Activated T-helper 1 cell treated with anti-CD3 and anti-CD28 coated beads, Interleukin-12 subunit alpha, Interleukin-12 subunit beta, Interleukin-2, Interleukin-4 antibody, amounts not matched to agents 30 ng/mL and 10 ng/mL and 1 ng/mL, durations not matched to agents 14 hours and 24 hours and 36 hours (primary cell): ENCODE measurements at regions of chr15 and their contacts with region 1.

Region 1: GRCh38 chr15:78170848-78171773 is 21.9 kb downstream of the IDH3A start:
- DNase-seq: no peak
- H3K4me3 Mint-ChIP-seq: no peak overlapping the region
- H3K27ac Mint-ChIP-seq: peak overlapping the region; percentile 61
- H3K4me1 Mint-ChIP-seq: peaks cover 63% of the 10 kb centered on the region
- H3K27me3 Mint-ChIP-seq: no peaks in the 10 kb centered on the region

Region 2: DNA sequence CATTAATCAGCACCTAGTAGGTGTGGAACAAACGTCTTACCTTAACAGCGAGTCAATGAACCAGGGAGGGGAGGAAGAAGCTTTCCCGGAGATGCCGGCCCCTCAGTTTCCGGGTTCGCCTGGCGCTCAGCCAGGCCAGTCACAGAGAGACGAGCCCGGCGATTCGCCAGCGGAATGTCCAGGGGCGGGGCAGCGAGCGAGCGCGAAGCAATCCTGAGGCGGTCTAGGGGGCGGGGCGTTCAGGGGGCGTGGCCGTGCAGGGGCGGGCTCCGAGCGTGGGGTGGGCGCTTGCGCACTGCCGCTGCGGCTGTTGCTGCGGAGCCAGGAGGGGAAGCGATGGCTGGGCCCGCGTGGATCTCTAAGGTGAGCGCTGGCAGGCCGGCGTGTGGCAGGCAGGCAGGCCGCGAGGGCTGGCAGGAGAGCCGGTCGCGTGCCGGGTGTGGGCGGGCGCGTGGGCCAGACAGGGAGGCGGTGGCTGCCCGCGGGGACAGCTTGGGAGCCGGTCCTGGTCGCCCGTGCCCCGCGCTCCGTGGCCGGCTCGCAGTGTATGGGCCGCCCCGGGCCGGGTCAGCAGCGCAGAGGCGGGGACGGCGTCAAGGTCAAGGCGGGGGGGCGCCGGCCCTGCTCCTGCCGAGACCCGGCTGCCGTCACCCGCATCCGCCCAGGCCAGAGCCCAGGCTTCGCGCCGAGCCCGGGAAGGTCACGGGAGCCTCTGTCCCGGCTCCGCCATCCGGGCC is 21.9 kb before region 1 on chr15 and contains the start of gene IDH3A:
- intact Hi-C with region 1: loop called (anchors 1 kb)
- DNase-seq: peak; percentile 99
- H3K4me3 Mint-ChIP-seq: peak within 1 kb of the TSS; percentile 94
- H3K27ac Mint-ChIP-seq: peak within 1 kb of the TSS; percentile 89
- H3K4me1 Mint-ChIP-seq: peaks cover 41% of the 10 kb centered on the region
- H3K27me3 Mint-ChIP-seq: no peaks in the 10 kb centered on the region
- total RNA-seq, gene IDH3A: 160 and 163 TPM in 2 replicates

Region 3: GRCh38 chr15:78225783-78226541 is 54.9 kb after region 1 on chr15:
- intact Hi-C with region 1: loop called (anchors 1 kb)
- DNase-seq: no peak
- H3K4me3 Mint-ChIP-seq: no peak overlapping the region
- H3K27ac Mint-ChIP-seq: peak overlapping the region; percentile 61
- H3K4me1 Mint-ChIP-seq: peaks cover 9% of the 10 kb centered on the region
- H3K27me3 Mint-ChIP-seq: peaks cover 4% of the 10 kb centered on the region